Right ventricle myocardium inferior (tissue), 1 donor: ENCODE measurements at regions of chr13 and their contacts with region 1.

Region 1: GRCh38 chr13:111531505-111531904 is 211.1 kb downstream of the TEX29 start:
- DNase-seq: no peak
- ATAC-seq: no peak

Region 2: GRCh38 chr13:111474136-111475002 is 57.1 kb before region 1 on chr13:
- intact Hi-C with region 1: no loop called
- DNase-seq: no peak
- ATAC-seq: peak; percentile 42

Region 3: GRCh38 chr13:111491021-111491420 is 40.5 kb before region 1 on chr13:
- intact Hi-C with region 1: no loop called
- DNase-seq: no peak
- ATAC-seq: no peak

Region 4: DNA sequence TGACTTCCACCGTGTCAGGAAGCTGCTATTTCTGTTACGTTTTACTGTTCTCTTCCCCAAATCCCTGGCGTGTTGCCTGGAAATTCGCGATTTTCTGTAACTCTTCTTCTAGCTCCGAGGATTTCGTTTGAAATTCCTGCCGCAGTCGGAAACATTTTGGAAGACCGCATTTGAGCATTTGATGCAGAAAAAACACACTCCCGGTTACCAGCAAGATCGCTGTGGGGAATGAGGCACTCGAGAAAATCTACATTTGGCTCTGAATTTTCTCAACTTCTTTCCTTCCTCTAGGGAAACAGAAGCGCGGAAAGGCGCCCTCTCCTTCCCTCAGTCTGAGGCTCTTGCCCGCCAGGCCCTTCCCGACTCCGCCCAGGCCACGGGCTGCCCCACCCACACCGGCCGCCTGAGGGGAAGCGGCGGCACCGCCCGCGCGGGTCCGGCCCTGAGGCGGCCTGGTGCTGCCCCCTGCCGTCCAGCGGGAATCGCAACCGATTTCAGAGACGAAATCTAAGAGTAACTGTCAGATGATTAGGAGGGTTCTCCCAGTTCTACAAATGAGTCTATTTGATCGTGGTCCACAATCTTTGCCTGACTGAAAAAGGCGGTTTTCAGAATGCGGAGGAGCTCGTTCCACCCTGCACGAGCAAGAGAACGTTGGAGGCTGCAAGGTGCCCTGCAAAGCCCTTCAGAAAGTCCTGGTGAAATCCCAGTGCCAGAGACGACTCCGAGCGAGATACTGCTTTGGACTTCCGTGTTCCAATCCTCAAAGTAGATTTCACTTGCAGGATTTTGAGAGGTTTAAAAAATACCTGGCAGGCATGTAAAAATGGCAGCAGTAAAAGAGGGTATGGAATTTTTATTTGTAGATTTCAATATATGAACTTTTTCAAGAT is 1074.8 kb after region 1 on chr13:
- intact Hi-C with region 1: loop called (anchors 5 kb)
- DNase-seq: peak; percentile 97
- ATAC-seq: peak; percentile 100